Activated CD4-positive, alpha-beta T cell treated with anti-CD3 and anti-CD28 coated beads for 36 hours (primary cell): ENCODE measurements at regions of chr3 and their contacts with region 1.

Region 1: GRCh38 chr3:98540346-98540745 is 8.6 kb downstream of the GPR15 start:
- DNase-seq: no peak
- ATAC-seq: peak; percentile 47
- H3K4me3 Mint-ChIP-seq: no peak overlapping the region
- H3K27ac Mint-ChIP-seq: peak overlapping the region; percentile 5
- H3K4me1 Mint-ChIP-seq: peaks cover 53% of the 10 kb centered on the region
- H3K27me3 Mint-ChIP-seq: no peaks in the 10 kb centered on the region

Region 2: DNA sequence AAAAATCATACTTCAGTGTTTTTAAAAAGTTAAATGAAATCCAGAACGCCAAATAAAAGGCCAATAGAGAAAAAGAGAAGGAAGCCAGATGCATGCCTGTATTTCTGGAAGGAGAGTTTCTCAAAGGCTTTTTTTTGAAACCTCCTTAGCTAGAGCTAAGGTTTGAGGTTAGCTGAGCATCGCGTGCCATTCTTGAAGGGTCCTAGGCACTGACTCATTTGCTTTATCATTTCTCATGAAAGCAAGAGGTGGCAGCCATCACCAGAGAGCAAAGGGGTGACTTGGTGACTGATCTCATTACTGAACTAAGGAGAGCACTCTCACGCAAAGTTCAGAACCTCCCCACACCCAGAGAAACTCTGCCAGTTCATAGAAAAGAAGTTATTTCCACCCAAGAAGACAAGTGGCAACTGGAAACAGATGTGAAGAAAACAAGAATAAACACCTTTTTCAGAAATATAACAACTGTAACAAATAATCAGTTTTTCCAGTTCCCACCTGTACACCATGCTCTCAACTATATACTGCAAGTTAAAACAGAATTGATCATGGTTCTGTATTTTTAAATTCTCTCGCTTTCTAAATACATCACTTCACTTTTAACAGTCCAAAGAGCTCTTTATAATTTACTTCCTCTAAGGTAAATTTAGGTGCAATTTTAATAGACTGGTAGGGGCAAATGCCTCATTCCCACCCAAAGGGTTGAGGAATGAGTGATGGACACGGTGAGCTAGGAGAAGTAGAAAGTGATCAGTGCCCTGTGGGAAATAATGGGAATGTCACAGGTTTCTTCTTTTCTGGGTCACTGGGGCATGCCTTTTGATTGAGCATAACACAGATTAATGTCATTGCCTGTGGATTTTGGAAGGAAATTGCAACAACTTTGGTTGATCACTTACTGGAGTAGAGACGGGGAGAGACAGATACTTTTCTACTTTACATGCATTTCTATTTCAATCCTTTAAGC is 16.1 kb after region 1 on chr3:
- CTCF ChIA-PET with region 1: interaction called, 25 read pairs
- POLR2A ChIA-PET with region 1: interaction called, 45 read pairs
- intact Hi-C with region 1: loop called (anchors 1 kb)
- DNase-seq: peak; percentile 86
- ATAC-seq: peak; percentile 78
- H3K4me3 Mint-ChIP-seq: peak overlapping the region; percentile 67
- H3K27ac Mint-ChIP-seq: peak overlapping the region; percentile 94
- H3K4me1 Mint-ChIP-seq: peaks cover 83% of the 10 kb centered on the region
- H3K27me3 Mint-ChIP-seq: no peaks in the 10 kb centered on the region

Region 3: DNA sequence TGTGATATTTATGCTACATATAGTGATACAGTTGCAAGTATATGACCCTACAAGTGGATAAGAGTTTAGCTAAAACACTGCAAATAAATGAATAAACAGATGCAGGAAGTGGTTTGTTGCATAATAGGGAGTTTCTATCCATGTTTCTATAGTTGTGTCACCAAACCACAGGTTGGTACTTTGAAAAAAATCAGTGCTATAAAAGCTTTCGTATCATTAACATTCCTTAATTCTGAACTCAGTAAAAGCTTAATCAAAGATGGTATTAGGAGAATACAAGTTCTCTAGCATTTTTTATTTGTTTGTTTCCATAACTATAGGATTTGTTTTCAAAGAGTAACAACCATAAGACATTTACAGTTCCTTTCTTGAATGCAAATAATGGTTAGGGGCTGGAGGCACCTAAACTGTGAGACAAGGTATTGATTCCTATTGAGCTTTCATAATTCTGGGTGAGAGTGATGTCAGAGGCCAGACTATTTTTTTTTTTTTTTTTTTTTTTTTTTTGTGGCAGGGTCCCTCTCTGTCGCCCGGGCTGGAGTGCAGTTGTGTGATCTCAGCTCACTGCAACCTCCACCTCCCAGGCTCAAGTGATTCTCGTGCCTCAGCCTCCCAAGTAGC is 23.4 kb after region 1 on chr3:
- CTCF ChIA-PET with region 1: interaction called, 25 read pairs
- POLR2A ChIA-PET with region 1: interaction called, 8 read pairs
- intact Hi-C with region 1: loop called in 1 of 2 experiments (anchors 1 kb)
- DNase-seq: no peak
- ATAC-seq: peak; percentile 24
- H3K4me3 Mint-ChIP-seq: no peak overlapping the region
- H3K27ac Mint-ChIP-seq: peak overlapping the region; percentile 74
- H3K4me1 Mint-ChIP-seq: peaks cover 77% of the 10 kb centered on the region
- H3K27me3 Mint-ChIP-seq: no peaks in the 10 kb centered on the region